Calu3 (cell line): ENCODE measurements at regions of chr21 and their contacts with region 1.

Region 1: DNA sequence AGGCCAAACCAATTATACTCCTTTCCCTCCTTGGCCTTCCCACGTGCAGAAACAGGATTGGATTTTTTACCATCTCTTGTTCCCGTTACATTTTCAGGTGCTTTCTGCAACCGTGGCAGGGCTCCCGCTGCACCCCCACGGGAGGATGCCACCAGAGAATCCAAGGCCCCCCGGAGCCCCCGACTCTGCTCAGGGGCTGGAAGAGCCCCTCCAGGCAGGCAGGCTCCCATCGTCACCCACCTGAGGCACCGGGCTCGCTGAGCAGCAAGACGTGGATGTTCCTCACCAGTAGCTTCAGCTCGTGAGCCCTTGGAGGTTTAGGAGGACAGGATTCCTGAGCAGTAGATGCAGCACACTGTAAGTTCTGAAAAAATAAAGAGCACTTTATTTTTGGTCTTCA is 35.2 kb upstream of the PRDM15 start:
- DNase-seq: no peak
- H3K4me3 Mint-ChIP-seq: no peak overlapping the region
- H3K27ac Mint-ChIP-seq: no peak overlapping the region
- H3K4me1 Mint-ChIP-seq: no peaks in the 10 kb centered on the region
- H3K27me3 Mint-ChIP-seq: no peaks in the 10 kb centered on the region
- CTCF ChIP-seq: no peak

Region 2: GRCh38 chr21:41744531-41744930 is 169.8 kb before region 1 on chr21:
- CTCF ChIA-PET with region 1: no interaction called
- intact Hi-C with region 1: no loop called
- DNase-seq: no peak
- H3K4me3 Mint-ChIP-seq: no peak overlapping the region
- H3K27ac Mint-ChIP-seq: no peak overlapping the region
- H3K4me1 Mint-ChIP-seq: no peaks in the 10 kb centered on the region
- H3K27me3 Mint-ChIP-seq: no peaks in the 10 kb centered on the region
- CTCF ChIP-seq: no peak

Region 3: GRCh38 chr21:41896868-41897669 is 17.3 kb before region 1 on chr21:
- CTCF ChIA-PET with region 1: interaction called, 12 read pairs
- intact Hi-C with region 1: no loop called
- DNase-seq: no peak
- H3K4me3 Mint-ChIP-seq: no peak overlapping the region
- H3K27ac Mint-ChIP-seq: no peak overlapping the region
- H3K4me1 Mint-ChIP-seq: no peaks in the 10 kb centered on the region
- H3K27me3 Mint-ChIP-seq: no peaks in the 10 kb centered on the region
- CTCF ChIP-seq: no peak